Upper lobe of right lung (tissue), 1 donor: ENCODE measurements at regions of chr18 and their contacts with region 1.

Region 1: DNA sequence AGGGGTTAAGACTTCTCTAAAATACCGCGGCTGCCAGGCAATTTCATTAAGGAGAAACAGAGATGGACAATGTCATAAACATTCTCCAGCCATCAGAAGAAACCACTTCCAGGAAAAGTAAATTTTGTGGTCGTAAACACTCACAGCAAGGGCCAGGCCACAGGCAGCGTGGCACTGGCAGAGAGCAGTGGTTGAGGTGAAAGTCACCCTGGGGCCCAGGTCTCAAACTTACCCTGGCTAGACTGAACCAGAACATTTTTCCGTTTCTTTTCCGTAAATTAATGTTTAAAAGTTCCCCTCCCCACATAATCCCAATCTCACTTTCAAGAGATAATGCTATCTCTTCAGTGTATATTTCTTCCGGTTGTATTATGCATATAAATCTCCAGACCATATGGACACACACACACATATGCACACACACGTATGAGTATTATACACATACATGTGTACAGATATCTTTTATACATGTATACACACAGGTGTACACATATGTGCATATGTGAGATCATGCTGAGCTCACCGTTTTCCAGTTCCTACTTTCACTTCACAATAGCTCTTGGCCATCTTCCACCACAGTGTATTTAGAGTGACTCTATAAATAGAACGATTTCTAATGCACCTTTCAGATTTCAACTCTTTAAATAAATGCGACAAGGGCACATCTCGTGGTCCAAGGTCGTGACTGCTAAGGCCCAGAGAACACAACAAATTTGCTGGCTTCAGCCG is 90.1 kb downstream of the MALT1 start:
- DNase-seq: no peak
- ATAC-seq: no peak
- H3K4me3 ChIP-seq: no peak overlapping the region
- H3K27ac ChIP-seq: no peak overlapping the region
- H3K4me1 ChIP-seq: no peaks in the 10 kb centered on the region
- H3K27me3 ChIP-seq: peaks cover 8% of the 10 kb centered on the region
- CTCF ChIP-seq: no peak

Region 2: GRCh38 chr18:58529714-58530354 is 231.6 kb before region 1 on chr18:
- intact Hi-C with region 1: loop called (anchors 5 kb)
- DNase-seq: no peak
- ATAC-seq: peak; percentile 85
- H3K4me3 ChIP-seq: no peak overlapping the region
- H3K27ac ChIP-seq: no peak overlapping the region
- H3K4me1 ChIP-seq: no peaks in the 10 kb centered on the region
- H3K27me3 ChIP-seq: no peaks in the 10 kb centered on the region
- CTCF ChIP-seq: peak; percentile 83